Activated CD8-positive, alpha-beta T cell treated with anti-CD3 and anti-CD28 coated beads for 36 hours (primary cell): ENCODE measurements at regions of chr2 and their contacts with region 1.

Region 1: GRCh38 chr2:10097352-10098148 is 17.3 kb upstream of the CYS1 start:
- DNase-seq: peak; percentile 48
- ATAC-seq: peak; percentile 88
- H3K4me3 Mint-ChIP-seq: no peak overlapping the region
- H3K27ac Mint-ChIP-seq: no peak overlapping the region
- H3K4me1 Mint-ChIP-seq: no peaks in the 10 kb centered on the region
- H3K27me3 Mint-ChIP-seq: peaks cover 17% of the 10 kb centered on the region
- CTCF ChIP-seq: peak; percentile 91

Region 2: DNA sequence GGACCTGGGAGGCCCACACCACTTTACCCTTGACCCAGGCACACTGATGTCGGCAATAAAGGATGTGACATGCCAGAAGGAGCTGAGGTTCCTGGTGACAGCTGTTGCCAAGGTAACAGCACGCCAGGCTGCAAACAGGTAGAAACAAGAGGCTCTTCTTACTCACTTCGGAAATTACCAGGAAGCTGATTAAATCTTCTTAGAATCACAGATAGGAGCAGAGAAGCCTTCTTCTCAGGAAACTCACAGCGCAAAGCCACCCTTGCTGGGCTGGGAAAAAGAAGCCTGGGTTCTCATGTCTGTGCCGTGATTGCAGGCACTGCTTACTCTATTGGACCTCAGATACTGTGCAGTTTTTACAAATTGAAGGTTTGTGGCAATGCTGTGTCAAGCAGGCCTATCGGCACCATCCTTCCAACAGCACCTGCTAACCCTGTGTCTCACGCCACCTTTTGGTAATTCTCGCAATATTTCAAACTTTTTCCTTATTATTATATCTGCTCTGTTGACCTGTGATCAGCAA is 315.3 kb before region 1 on chr2:
- CTCF ChIA-PET with region 1: no interaction called
- POLR2A ChIA-PET with region 1: no interaction called
- intact Hi-C with region 1: no loop called
- DNase-seq: peak; percentile 85
- ATAC-seq: peak; percentile 75
- H3K4me3 Mint-ChIP-seq: peak overlapping the region; percentile 0
- H3K27ac Mint-ChIP-seq: peak overlapping the region; percentile 45
- H3K4me1 Mint-ChIP-seq: peaks cover 38% of the 10 kb centered on the region
- H3K27me3 Mint-ChIP-seq: no peaks in the 10 kb centered on the region
- CTCF ChIP-seq: no peak

Region 3: GRCh38 chr2:10079234-10079869 is 18.2 kb before region 1 on chr2:
- CTCF ChIA-PET with region 1: interaction called, 178 read pairs
- POLR2A ChIA-PET with region 1: interaction called, 3 read pairs
- intact Hi-C with region 1: no loop called
- DNase-seq: peak; percentile 26
- ATAC-seq: peak; percentile 26
- H3K4me3 Mint-ChIP-seq: peak overlapping the region; percentile 66
- H3K27ac Mint-ChIP-seq: no peak overlapping the region
- H3K4me1 Mint-ChIP-seq: peaks cover 24% of the 10 kb centered on the region
- H3K27me3 Mint-ChIP-seq: peaks cover 67% of the 10 kb centered on the region
- CTCF ChIP-seq: no peak

Region 4: GRCh38 chr2:10163498-10164486 is 66.2 kb after region 1 on chr2:
- CTCF ChIA-PET with region 1: no interaction called
- POLR2A ChIA-PET with region 1: no interaction called
- intact Hi-C with region 1: no loop called
- DNase-seq: no peak
- ATAC-seq: no peak
- H3K4me3 Mint-ChIP-seq: no peak overlapping the region
- H3K27ac Mint-ChIP-seq: no peak overlapping the region
- H3K4me1 Mint-ChIP-seq: no peaks in the 10 kb centered on the region
- H3K27me3 Mint-ChIP-seq: no peaks in the 10 kb centered on the region
- CTCF ChIP-seq: no peak